CD4-positive, alpha-beta memory T cell (primary cell): ENCODE measurements at regions of chr4 and their contacts with region 1.

Region 1: GRCh38 chr4:143538979-143539669 is 25.6 kb downstream of the SMARCA5 start:
- DNase-seq: no peak
- H3K4me3 ChIP-seq: no peak overlapping the region
- H3K4me3 Mint-ChIP-seq: no peak overlapping the region
- H3K27ac ChIP-seq: no peak overlapping the region
- H3K27ac Mint-ChIP-seq: peak overlapping the region in 6 of 7 donors; percentile 19 to 73 (median 40)
- H3K4me1 ChIP-seq: no peaks in the 10 kb centered on the region
- H3K4me1 Mint-ChIP-seq: peaks cover 11 to 17% (median 14%) of the 10 kb centered on the region in 4 donors
- H3K27me3 ChIP-seq: no peaks in the 10 kb centered on the region
- H3K27me3 Mint-ChIP-seq: no peaks in the 10 kb centered on the region

Region 2: GRCh38 chr4:143502231-143502630 is 36.9 kb before region 1 on chr4:
- CTCF ChIA-PET with region 1: no interaction called
- POLR2A ChIA-PET with region 1: no interaction called
- intact Hi-C with region 1: no loop called
- DNase-seq: no peak
- H3K4me3 ChIP-seq: no peak overlapping the region
- H3K4me3 Mint-ChIP-seq: no peak overlapping the region
- H3K27ac ChIP-seq: no peak overlapping the region
- H3K27ac Mint-ChIP-seq: no peak overlapping the region
- H3K4me1 ChIP-seq: no peaks in the 10 kb centered on the region
- H3K4me1 Mint-ChIP-seq: no peaks in the 10 kb centered on the region
- H3K27me3 ChIP-seq: no peaks in the 10 kb centered on the region
- H3K27me3 Mint-ChIP-seq: peaks cover 0 to 6% of the 10 kb centered on the region in 2 donors

Region 3: DNA sequence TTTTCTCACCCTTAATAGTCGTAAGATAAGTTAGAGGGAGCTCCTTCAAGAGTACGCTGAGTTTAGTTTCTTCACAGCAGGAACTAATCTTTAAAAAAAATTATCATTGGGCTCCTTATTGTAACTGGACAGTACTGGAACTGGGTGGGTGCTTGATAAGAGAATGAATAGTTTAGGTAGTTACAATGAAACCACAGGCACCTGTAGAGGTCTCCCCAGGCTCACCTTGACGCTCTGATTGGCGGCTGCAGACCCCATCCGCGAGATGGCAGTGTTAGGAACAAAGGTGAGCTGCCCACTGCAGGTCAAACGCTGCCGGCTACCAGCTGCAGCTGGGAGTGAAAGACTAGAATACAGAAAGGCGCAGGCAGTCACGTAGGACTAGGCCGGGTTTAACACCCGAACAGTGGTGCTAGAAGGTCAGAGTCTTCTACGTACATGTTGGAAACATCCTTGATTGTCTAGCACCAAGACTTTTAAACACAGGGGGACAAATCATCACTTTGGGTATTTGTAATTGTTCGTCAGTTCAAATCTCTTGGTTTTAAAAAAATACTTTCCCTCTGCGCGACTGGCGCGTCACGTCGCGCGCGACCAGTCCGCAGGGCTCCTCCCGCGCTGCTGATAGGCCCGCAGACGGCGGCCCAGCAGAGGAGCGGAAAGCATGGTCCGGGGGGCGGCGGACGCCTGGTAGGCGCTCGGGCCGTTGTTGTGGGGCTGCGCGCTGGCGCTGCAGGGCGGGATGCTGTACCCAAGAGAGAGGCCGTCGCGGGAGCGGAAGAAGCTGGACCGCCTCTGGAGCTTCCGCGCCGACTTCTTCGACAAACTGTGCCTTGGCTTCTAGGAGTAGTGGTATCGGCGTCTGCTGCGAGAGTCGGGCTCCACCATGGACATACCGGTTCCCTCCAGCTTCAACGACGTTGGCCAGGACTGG is 20.0 kb after region 1 on chr4:
- CTCF ChIA-PET with region 1: interaction called, 10 read pairs
- POLR2A ChIA-PET with region 1: no interaction called
- intact Hi-C with region 1: no loop called
- DNase-seq: peak; percentile 68 to 80 (median 77)
- H3K4me3 ChIP-seq: peak overlapping the region; percentile 64 to 78
- H3K4me3 Mint-ChIP-seq: peak overlapping the region; percentile 91 to 98 (median 95)
- H3K27ac ChIP-seq: peak overlapping the region; percentile 46
- H3K27ac Mint-ChIP-seq: peak overlapping the region; percentile 92 to 98 (median 97)
- H3K4me1 ChIP-seq: peaks cover 19% of the 10 kb centered on the region
- H3K4me1 Mint-ChIP-seq: peaks cover 10 to 29% (median 20%) of the 10 kb centered on the region in 4 donors
- H3K27me3 ChIP-seq: no peaks in the 10 kb centered on the region
- H3K27me3 Mint-ChIP-seq: no peaks in the 10 kb centered on the region